CD4-positive, alpha-beta memory T cell (primary cell): ENCODE measurements at regions of chr10 and their contacts with region 1.

Region 1: DNA sequence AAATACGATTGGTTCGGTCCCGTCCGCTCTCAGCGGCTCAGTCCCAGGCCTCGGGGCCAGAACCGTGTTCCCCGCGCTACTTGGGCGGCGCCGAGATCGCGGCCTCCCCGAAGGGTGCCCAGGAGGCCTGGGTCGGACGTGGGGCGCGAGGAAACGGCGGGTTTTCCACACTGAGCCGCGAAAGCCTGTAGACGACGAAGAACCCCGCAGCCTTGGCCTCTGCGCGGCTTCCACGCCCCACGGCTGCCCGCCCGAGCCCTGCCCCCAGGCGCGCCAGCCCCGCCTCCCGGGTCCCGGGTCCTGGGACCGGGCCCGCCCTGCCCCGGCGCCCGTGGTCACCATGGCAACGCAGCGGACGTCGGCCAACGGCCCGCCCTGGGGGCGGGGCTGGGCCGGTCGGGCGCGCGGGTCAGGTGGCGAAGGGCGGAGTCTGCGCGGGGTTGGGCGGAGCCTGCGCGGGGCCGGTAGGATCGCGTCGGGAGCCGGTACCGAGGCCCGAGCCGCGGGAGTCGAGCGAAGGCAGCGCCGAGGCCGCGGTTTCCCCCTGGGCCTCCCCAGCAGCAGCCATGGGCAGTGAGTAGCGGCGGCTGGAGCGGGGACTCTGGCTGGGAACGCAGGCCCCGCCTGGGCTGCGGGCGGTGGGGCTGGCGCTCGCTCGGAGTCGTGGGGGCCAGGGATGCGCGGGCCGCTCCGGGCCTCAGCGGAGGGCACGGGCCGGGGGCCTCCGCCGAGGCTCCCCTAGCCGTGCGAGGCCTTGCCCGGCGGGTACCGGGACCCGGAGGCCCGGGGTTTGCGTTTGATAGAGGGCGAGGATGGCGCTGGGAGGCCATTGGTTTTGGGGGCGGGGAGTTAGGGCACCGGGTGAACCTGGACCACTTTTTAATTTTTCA is at the start of gene SEC61A2:
- DNase-seq: peak; percentile 93 to 99 (median 97)
- H3K4me3 ChIP-seq: peak within 1 kb of the TSS; percentile 55 to 79
- H3K4me3 Mint-ChIP-seq: peak within 1 kb of the TSS; percentile 88 to 93 (median 91)
- H3K27ac ChIP-seq: peak within 1 kb of the TSS; percentile 72
- H3K27ac Mint-ChIP-seq: peak within 1 kb of the TSS; percentile 78 to 96 (median 93)
- H3K4me1 ChIP-seq: peaks cover 20% of the 10 kb centered on the region
- H3K4me1 Mint-ChIP-seq: peaks cover 11 to 33% (median 22%) of the 10 kb centered on the region in 4 donors
- H3K27me3 ChIP-seq: no peaks in the 10 kb centered on the region
- H3K27me3 Mint-ChIP-seq: no peaks in the 10 kb centered on the region
- total RNA-seq, gene SEC61A2: 12.2 to 13.4 TPM

Region 2: GRCh38 chr10:11934262-11934661 is 195.2 kb before region 1 on chr10:
- CTCF ChIA-PET with region 1: no interaction called
- POLR2A ChIA-PET with region 1: no interaction called
- intact Hi-C with region 1: no loop called
- DNase-seq: no peak
- H3K4me3 ChIP-seq: no peak overlapping the region
- H3K4me3 Mint-ChIP-seq: no peak overlapping the region
- H3K27ac ChIP-seq: no peak overlapping the region
- H3K27ac Mint-ChIP-seq: peak overlapping the region in 1 of 7 donors; percentile 18
- H3K4me1 ChIP-seq: no peaks in the 10 kb centered on the region
- H3K4me1 Mint-ChIP-seq: no peaks in the 10 kb centered on the region
- H3K27me3 ChIP-seq: no peaks in the 10 kb centered on the region
- H3K27me3 Mint-ChIP-seq: no peaks in the 10 kb centered on the region

Region 3: DNA sequence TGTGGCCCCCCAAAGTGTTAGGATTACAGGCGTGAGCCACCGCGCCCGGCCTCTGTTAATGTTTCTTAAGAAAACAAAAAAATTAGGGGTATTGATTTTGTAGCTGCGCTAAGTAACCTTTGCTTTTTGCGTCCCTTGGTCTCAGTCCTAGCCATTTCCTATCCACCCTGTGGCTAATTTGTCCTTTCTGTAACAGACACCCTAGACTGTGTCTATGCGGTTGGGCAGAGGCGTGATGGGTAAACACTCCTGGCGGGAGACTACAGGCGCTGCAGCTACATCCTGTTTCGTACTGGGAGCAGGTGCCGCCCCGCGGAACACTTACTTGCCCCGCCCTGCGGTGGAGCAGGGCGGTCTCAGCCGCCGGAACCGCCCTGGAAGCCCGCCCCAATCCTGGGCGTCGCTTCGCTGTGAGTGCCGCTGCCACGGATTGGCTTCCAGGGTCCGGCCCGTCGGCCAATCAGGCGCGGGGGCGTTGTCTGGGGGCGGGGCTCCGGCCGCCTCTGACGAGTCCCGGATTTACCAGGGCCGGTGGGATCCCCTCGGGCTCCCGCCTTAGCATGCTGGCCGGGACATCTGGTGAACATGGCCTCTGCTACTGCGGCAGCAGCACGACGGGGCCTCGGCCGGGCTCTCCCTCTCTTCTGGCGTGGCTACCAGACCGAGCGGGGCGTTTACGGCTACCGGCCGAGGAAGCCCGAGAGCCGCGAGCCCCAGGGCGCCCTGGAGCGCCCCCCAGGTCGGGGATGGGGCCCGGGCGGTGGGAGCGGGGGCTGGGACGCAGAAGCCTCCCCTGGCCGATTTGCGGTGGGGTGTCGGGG is 60.8 kb before region 1 on chr10 and contains the start of gene DHTKD1:
- CTCF ChIA-PET with region 1: interaction called, 3 read pairs
- POLR2A ChIA-PET with region 1: interaction called, 3 read pairs
- intact Hi-C with region 1: loop called (anchors 1 kb)
- DNase-seq: peak; percentile 97 to 98 (median 97)
- H3K4me3 ChIP-seq: peak within 1 kb of the TSS; percentile 52 to 83
- H3K4me3 Mint-ChIP-seq: peak within 1 kb of the TSS; percentile 85 to 93 (median 89)
- H3K27ac ChIP-seq: peak within 1 kb of the TSS; percentile 83
- H3K27ac Mint-ChIP-seq: peak within 1 kb of the TSS; percentile 70 to 97 (median 96)
- H3K4me1 ChIP-seq: peaks cover 16% of the 10 kb centered on the region
- H3K4me1 Mint-ChIP-seq: peaks cover 11 to 24% (median 18%) of the 10 kb centered on the region in 4 donors
- H3K27me3 ChIP-seq: no peaks in the 10 kb centered on the region
- H3K27me3 Mint-ChIP-seq: peaks cover 0 to 2% of the 10 kb centered on the region in 2 donors
- total RNA-seq, gene DHTKD1: 15.7 to 16.5 TPM

Region 4: DNA sequence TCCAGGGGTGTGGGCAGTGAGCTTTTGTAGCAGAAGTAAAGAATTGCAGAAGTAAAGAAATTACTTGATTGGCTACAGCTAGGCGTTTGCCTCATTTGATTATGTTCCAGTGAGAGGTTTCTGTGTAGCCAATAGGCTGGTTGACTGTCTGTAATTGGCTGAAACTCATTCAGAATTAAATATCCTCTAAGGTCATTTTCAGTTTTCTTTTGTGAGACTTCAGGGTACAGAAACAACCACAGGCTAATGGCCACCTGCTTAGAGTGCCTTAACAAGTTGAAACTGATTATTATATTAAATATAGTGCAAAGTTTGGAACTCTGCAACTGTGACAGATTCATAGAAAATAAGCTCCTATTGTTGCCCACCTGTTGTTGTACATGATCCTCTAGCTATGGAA is 10.6 kb after region 1 on chr10:
- CTCF ChIA-PET with region 1: no interaction called
- POLR2A ChIA-PET with region 1: no interaction called
- intact Hi-C with region 1: no loop called
- DNase-seq: no peak
- H3K4me3 ChIP-seq: no peak overlapping the region
- H3K4me3 Mint-ChIP-seq: no peak overlapping the region
- H3K27ac ChIP-seq: no peak overlapping the region
- H3K27ac Mint-ChIP-seq: no peak overlapping the region
- H3K4me1 ChIP-seq: no peaks in the 10 kb centered on the region
- H3K4me1 Mint-ChIP-seq: peaks cover 0 to 3% (median 0%) of the 10 kb centered on the region in 4 donors
- H3K27me3 ChIP-seq: no peaks in the 10 kb centered on the region
- H3K27me3 Mint-ChIP-seq: no peaks in the 10 kb centered on the region

Region 5: GRCh38 chr10:12181065-12181775 is 51.8 kb after region 1 on chr10:
- CTCF ChIA-PET with region 1: no interaction called
- POLR2A ChIA-PET with region 1: interaction called, 3 read pairs
- intact Hi-C with region 1: loop called (anchors 1 kb)
- DNase-seq: peak; percentile 68 to 89 (median 79)
- H3K4me3 ChIP-seq: no peak overlapping the region
- H3K4me3 Mint-ChIP-seq: peak overlapping the region in 6 of 8 donors; percentile 54 to 77 (median 62)
- H3K27ac ChIP-seq: peak overlapping the region; percentile 32
- H3K27ac Mint-ChIP-seq: peak overlapping the region; percentile 84 to 95 (median 92)
- H3K4me1 ChIP-seq: peaks cover 27% of the 10 kb centered on the region
- H3K4me1 Mint-ChIP-seq: peaks cover 15 to 29% (median 24%) of the 10 kb centered on the region in 4 donors
- H3K27me3 ChIP-seq: no peaks in the 10 kb centered on the region
- H3K27me3 Mint-ChIP-seq: no peaks in the 10 kb centered on the region

Region 6: DNA sequence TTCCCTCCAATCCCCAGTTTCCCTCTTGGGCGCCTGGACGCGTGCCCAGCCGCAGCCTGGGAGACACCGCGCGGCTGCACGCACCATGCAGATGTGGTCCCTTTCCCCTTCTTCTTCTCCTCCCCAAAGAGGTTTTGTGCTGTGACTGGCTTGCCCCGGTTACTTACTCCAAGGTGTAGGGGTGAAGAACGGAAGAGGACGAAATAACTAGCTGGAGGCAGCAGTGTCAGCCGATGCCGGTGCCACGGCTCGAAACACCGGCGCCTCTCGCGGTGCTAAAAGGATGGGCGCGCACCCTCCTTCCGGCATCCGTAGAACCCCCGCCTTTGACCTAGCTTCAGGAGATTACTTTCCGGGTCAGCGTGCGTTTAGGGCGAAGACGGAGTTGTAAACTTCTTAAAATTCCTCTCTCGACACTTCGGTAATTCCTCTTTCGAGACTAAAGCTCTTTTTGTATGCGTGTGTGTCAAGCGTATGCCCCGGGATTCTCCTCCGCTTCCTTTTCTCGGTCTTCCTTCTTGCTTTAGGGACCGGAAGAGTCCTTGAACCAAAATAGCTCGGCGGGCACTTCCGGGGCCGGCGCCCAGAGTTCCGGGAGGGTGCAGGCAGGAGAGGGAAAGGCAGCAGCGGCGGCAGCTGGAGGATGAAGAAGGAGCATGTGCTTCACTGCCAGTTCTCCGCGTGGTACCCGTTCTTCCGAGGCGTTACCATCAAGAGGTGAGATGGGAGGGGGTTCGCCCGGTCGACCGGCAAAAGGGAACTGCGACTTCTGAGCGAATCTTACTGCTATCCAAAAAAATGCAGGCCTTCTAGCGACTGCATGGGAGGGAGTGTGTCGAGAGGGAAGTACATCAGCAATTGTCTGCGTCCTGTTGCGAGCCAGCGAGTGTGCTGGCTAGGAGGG is 66.4 kb after region 1 on chr10 and contains the starts of genes CDC123 and NUDT5:
- CTCF ChIA-PET with region 1: no interaction called
- POLR2A ChIA-PET with region 1: interaction called, 10 read pairs
- intact Hi-C with region 1: loop called (anchors 1 kb)
- DNase-seq: peak; percentile 85 to 89 (median 88)
- H3K4me3 ChIP-seq: peak within 1 kb of the TSS; percentile 78 to 93
- H3K4me3 Mint-ChIP-seq: peak within 1 kb of the TSS; percentile 95 to 99 (median 98)
- H3K27ac ChIP-seq: peak within 1 kb of the TSS; percentile 96
- H3K27ac Mint-ChIP-seq: peak within 1 kb of the TSS; percentile 97 to 100 (median 99)
- H3K4me1 ChIP-seq: peaks cover 43% of the 10 kb centered on the region
- H3K4me1 Mint-ChIP-seq: peaks cover 36 to 72% (median 54%) of the 10 kb centered on the region in 4 donors
- H3K27me3 ChIP-seq: no peaks in the 10 kb centered on the region
- H3K27me3 Mint-ChIP-seq: no peaks in the 10 kb centered on the region
- total RNA-seq, gene CDC123: 40.7 to 41.8 TPM
- total RNA-seq, gene NUDT5: 55.6 to 61.2 TPM

Region 7: DNA sequence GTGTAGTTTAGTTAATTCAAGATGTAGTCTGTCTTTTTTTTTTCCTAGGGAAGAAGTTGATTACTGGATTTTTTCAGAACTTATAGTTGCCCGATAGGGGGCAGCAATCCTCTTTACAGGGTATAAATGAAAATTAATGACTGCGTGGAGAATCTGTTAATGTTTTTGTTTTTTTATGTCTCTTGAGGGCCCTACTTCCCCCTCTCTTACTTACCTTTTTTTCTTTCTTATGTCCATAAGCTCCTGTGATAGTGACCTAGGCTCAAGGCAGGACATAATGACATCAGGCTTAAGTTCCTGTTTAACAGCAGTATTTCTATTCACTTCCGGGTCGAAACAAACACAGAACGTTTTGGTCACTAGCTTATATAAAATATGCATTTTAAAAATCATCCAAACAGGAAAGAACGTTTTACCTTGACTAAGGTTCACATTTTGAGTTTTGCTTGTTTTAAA is 85.3 kb after region 1 on chr10:
- CTCF ChIA-PET with region 1: no interaction called
- POLR2A ChIA-PET with region 1: no interaction called
- intact Hi-C with region 1: no loop called
- DNase-seq: peak; percentile 45 to 54 (median 53)
- H3K4me3 ChIP-seq: no peak overlapping the region
- H3K4me3 Mint-ChIP-seq: peak overlapping the region; percentile 48 to 79 (median 68)
- H3K27ac ChIP-seq: peak overlapping the region; percentile 22
- H3K27ac Mint-ChIP-seq: peak overlapping the region; percentile 45 to 94 (median 89)
- H3K4me1 ChIP-seq: peaks cover 6% of the 10 kb centered on the region
- H3K4me1 Mint-ChIP-seq: peaks cover 10 to 20% (median 16%) of the 10 kb centered on the region in 4 donors
- H3K27me3 ChIP-seq: no peaks in the 10 kb centered on the region
- H3K27me3 Mint-ChIP-seq: no peaks in the 10 kb centered on the region